GM18951 (cell line): ENCODE measurements at regions of chr2 and their contacts with region 1.

Region 1: GRCh38 chr2:126527836-126528507 is 128.0 kb upstream of the GYPC start:
- POLR2A ChIP-seq: no peak

Region 2: DNA sequence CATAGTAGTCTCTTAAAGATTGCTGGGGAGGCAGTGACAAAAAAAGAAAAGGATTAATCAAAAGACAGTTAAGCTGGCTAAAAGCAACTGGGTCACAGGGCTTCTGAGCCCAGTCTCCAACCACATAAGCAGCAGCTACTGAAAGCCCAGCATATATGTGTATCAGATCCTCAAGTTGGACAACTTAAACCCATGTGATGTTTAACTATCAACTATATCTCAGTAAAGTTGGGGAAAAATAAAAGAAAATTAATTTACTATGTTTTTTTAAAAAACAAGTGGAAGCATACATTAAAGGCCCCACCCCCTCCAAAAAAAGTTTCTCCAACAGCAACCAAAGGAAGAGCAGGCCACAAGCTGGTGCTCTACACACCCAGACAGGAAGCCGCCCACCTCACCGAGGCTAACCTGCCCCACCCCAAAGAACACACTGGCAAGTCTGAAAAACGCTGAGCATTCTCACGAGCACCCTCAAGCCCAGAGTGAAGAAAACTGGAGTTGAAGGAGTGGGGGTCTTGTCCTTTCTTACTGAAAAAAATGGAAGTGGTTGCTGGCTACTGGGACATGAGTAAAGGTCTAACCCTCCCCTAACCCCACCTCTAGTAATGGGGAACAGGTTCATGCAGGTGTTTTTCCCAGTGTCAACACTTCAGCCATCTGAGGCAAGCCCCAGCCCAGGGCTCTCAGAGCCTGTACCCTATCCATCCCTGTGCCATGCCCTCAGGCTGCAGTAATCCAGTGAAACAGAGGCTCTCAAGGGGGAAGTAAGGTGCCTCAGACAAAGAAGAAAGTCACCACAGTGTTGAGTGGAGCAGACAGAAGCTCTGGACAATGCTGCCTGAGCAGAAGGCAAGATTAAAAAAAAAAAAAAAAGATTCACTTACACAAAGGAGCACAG is 234.3 kb after region 1 on chr2:
- in situ Hi-C with region 1: loop called (anchors 25 kb)
- POLR2A ChIP-seq: no peak